ENCODE measurements at regions of chr17 and their contacts with region 1.

Region 1: GRCh38 chr17:75784473-75785015 is at the start of gene UNK:
- DNase-seq: peak; percentile 86 to 98 (median 96)
- ATAC-seq: peak; percentile 80
- H3K4me3 ChIP-seq: peak within 1 kb of the TSS; percentile 94
- H3K4me3 Mint-ChIP-seq: peak within 1 kb of the TSS; percentile 84 to 98 (median 92)
- H3K27ac ChIP-seq: peak within 1 kb of the TSS; percentile 99
- H3K27ac Mint-ChIP-seq: peak within 1 kb of the TSS; percentile 99 to 100 (median 100)
- H3K4me1 ChIP-seq: peaks cover 31 to 33% of the 10 kb centered on the region in 2 donors
- H3K4me1 Mint-ChIP-seq: peaks cover 23 to 60% (median 51%) of the 10 kb centered on the region in 7 donors
- H3K27me3 ChIP-seq: no peaks in the 10 kb centered on the region
- H3K27me3 Mint-ChIP-seq: peaks cover 0 to 2% (median 0%) of the 10 kb centered on the region in 5 donors
- total RNA-seq, gene UNK: 32.0 to 49.8 (median 41.0) TPM

Region 2: DNA sequence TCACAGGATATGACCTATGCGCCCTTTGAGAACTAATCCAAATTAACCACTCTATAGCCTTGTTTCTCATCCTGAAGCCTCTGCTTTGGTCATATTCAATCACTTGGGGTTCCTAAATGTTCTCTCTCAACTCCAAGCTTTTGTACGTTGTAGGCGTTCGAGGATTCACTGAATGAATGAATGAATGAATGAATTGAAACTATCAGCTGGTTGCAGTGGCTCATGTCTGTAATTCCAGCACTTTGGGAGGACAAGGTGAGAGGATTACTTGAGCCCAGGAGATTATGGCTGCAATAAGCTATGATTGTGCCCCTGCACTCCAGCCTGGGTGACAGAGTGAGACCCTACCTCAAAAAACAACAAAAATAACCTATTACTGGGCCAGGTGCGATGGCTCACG is 595.9 kb before region 1 on chr17:
- CTCF ChIA-PET with region 1: no interaction called
- POLR2A ChIA-PET with region 1: no interaction called
- intact Hi-C with region 1: no loop called
- DNase-seq: no peak
- ATAC-seq: no peak
- H3K4me3 ChIP-seq: no peak overlapping the region
- H3K4me3 Mint-ChIP-seq: no peak overlapping the region
- H3K27ac ChIP-seq: no peak overlapping the region
- H3K27ac Mint-ChIP-seq: peak overlapping the region in 1 of 9 donors; percentile 95
- H3K4me1 ChIP-seq: peaks cover 6 to 7% of the 10 kb centered on the region in 2 donors
- H3K4me1 Mint-ChIP-seq: peaks cover 8 to 23% (median 12%) of the 10 kb centered on the region in 7 donors
- H3K27me3 ChIP-seq: no peaks in the 10 kb centered on the region
- H3K27me3 Mint-ChIP-seq: no peaks in the 10 kb centered on the region

Region 3: GRCh38 chr17:75405365-75406221 is 379.0 kb before region 1 on chr17 and contains the start of gene GRB2:
- CTCF ChIA-PET with region 1: no interaction called
- POLR2A ChIA-PET with region 1: interaction called, 3 read pairs
- intact Hi-C with region 1: loop called in 1 of 2 experiments (anchors 1 kb)
- DNase-seq: peak; percentile 98 to 100 (median 100)
- ATAC-seq: peak; percentile 93
- H3K4me3 ChIP-seq: peak within 1 kb of the TSS; percentile 83
- H3K4me3 Mint-ChIP-seq: peak within 1 kb of the TSS; percentile 91 to 100 (median 96)
- H3K27ac ChIP-seq: peak within 1 kb of the TSS; percentile 91
- H3K27ac Mint-ChIP-seq: peak within 1 kb of the TSS; percentile 84 to 98 (median 95)
- H3K4me1 ChIP-seq: peaks cover 31 to 33% of the 10 kb centered on the region in 2 donors
- H3K4me1 Mint-ChIP-seq: peaks cover 26 to 51% (median 47%) of the 10 kb centered on the region in 7 donors
- H3K27me3 ChIP-seq: no peaks in the 10 kb centered on the region
- H3K27me3 Mint-ChIP-seq: no peaks in the 10 kb centered on the region
- total RNA-seq, gene GRB2: 112 to 167 (median 139) TPM

Region 4: GRCh38 chr17:75749545-75750389 is 34.8 kb before region 1 on chr17:
- CTCF ChIA-PET with region 1: interaction called, 15 read pairs
- POLR2A ChIA-PET with region 1: interaction called, 62 read pairs
- intact Hi-C with region 1: loop called in 1 of 2 experiments (anchors 2 kb)
- DNase-seq: peak; percentile 65 to 92 (median 82)
- ATAC-seq: peak; percentile 84
- H3K4me3 ChIP-seq: no peak overlapping the region
- H3K4me3 Mint-ChIP-seq: peak overlapping the region in 2 of 10 donors; percentile 25 to 44
- H3K27ac ChIP-seq: no peak overlapping the region
- H3K27ac Mint-ChIP-seq: peak overlapping the region in 2 of 9 donors; percentile 21 to 55
- H3K4me1 ChIP-seq: peaks cover 5 to 14% of the 10 kb centered on the region in 2 donors
- H3K4me1 Mint-ChIP-seq: peaks cover 9 to 21% (median 14%) of the 10 kb centered on the region in 7 donors
- H3K27me3 ChIP-seq: no peaks in the 10 kb centered on the region
- H3K27me3 Mint-ChIP-seq: peaks cover 0 to 5% (median 0%) of the 10 kb centered on the region in 5 donors

Region 5: DNA sequence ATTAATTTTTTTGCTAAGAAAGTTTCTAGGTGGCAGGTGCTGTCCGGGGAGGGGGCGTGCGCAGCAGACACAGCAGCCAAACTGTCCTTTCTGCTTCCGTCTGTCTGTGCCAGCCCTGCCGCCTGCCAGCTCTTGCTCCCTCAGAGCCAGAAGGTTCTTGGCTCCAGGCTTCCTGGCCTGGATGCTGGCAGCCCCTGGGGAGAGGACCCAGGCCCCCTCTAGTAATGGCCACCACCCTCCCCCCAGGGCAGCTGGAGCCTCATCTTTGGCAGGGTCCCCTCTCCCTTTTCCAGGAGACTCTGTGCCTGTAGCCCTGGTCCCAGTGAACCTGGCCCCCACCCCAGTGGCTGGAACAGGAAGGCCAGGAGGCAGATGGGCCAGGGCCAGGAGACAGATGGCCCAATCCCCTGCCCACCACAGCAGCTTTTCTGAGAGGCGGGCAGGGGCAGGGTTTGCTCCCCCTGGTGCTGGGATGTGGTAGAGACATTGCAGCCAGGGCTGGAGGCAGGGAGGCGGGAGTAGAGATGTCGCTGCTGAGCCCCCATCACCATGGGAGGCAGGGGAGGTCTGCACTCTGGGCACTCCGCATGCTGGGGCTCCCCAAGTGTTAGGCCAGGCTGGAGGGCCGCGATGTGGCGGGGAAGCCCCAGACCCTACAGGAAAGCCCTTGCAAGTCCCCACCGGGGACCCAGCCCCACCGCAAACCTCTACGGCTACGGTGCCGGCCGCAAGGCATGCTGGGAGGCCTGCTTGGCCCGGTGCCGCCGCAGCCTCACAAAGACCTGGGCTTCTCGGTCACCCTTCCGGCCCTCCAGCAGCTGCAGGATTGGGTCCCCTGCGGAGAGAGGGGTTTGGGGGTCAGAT is 42.9 kb after region 1 on chr17:
- CTCF ChIA-PET with region 1: interaction called, 30 read pairs
- POLR2A ChIA-PET with region 1: interaction called, 77 read pairs
- intact Hi-C with region 1: loop called (anchors 2 to 5 kb)
- DNase-seq: peak; percentile 41 to 66 (median 61)
- ATAC-seq: peak; percentile 76
- H3K4me3 ChIP-seq: peak overlapping the region; percentile 30
- H3K4me3 Mint-ChIP-seq: peak overlapping the region; percentile 37 to 74 (median 56)
- H3K27ac ChIP-seq: peak overlapping the region; percentile 67
- H3K27ac Mint-ChIP-seq: peak overlapping the region; percentile 6 to 91 (median 76)
- H3K4me1 ChIP-seq: peaks cover 8% of the 10 kb centered on the region in 2 donors
- H3K4me1 Mint-ChIP-seq: peaks cover 5 to 16% (median 11%) of the 10 kb centered on the region in 7 donors
- H3K27me3 ChIP-seq: no peaks in the 10 kb centered on the region
- H3K27me3 Mint-ChIP-seq: no peaks in the 10 kb centered on the region

Region 6: DNA sequence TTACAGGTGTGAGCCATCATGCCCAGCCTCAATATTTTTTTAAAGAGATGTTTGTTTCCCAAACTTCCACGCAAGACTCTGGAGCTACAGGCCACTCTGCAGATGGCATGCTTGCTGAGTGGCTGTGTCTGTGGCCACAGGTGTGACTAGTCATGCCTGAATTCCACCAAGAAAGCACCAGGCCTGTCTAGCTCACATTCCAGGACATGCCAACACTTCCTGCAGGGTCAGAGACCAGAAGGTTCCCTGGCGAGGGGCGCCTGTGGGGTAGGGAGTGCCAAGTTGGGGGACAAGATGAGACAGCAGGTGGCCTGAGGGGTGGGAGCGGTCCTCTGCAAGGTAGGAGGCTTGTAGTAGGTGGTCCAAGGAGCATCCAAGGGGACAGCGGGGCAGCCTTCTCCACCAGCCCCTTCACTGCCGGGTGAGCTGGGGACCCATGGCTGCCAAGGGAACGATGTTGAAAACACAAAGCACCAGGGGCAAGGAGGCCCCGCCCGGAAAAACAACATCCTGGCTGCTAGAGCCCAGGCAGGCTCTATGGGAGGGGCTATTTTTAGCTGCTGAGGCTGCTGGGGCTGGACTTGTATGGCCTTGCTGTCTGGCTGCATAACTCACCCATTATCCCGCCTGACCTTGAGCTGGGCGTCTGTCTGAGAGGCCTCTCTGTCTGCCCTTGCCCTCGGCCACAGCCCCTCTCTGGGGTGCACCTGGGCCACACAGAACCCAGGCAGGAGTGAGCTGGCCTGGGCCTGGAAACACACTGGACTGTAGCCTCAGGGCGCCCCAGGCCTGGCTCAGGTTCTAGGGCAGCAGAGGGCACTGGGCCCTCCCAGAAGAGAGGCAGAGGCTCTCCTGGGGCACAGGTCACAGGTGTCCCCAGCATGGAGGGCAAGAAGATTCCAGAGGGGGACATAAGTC is 88.1 kb after region 1 on chr17:
- CTCF ChIA-PET with region 1: interaction called, 3 read pairs
- POLR2A ChIA-PET with region 1: interaction called, 28 read pairs
- intact Hi-C with region 1: no loop called
- DNase-seq: peak in 8 of 9 donors; percentile 41 to 75 (median 59)
- ATAC-seq: peak; percentile 68
- H3K4me3 ChIP-seq: no peak overlapping the region
- H3K4me3 Mint-ChIP-seq: peak overlapping the region in 5 of 10 donors; percentile 30 to 69 (median 48)
- H3K27ac ChIP-seq: peak overlapping the region; percentile 57
- H3K27ac Mint-ChIP-seq: peak overlapping the region; percentile 68 to 98 (median 83)
- H3K4me1 ChIP-seq: peaks cover 30 to 36% of the 10 kb centered on the region in 2 donors
- H3K4me1 Mint-ChIP-seq: peaks cover 24 to 50% (median 39%) of the 10 kb centered on the region in 7 donors
- H3K27me3 ChIP-seq: no peaks in the 10 kb centered on the region
- H3K27me3 Mint-ChIP-seq: peaks cover 0 to 2% (median 0%) of the 10 kb centered on the region in 5 donors

Region 7: DNA sequence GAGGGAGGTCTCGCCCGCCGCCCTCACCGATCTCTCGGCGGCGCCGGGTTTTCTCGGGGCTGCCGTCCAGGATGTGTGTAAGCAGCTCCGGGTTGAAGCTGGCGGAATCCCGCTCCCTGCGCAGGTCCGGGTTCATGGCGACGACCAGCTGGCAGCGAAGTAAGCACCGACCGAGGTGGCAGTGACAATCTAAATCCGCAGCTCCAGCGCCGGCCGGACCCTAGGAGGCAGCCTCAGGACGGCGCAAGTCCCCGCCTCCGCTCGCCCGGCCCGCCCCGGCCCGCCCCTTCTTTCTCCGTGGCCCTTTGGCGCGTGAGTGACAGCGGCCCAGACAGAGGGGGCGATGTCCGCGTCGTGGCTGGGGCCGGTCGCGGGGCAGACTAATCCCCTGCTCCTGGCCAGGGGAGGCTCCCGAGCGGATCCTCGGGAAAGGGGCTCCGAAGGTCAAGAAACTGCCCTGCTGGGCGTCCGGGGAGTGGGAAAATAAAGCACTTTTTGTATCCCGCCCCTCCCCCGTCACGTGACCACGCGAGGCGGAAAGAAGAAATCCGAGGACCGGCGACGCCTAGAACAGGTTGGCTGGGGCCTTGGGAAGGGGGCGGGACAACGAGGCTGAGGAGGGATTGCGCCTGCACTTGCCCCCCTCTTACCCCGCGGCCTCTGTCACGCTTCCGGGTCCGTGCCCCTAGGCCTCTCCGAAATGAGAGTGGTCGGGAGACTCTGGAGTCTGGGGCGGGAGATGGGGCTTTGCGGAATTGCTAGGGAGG is 194.6 kb after region 1 on chr17 and contains the starts of genes ACOX1 and TEN1:
- CTCF ChIA-PET with region 1: no interaction called
- POLR2A ChIA-PET with region 1: interaction called, 3 read pairs
- intact Hi-C with region 1: loop called (anchors 1 kb)
- DNase-seq: peak; percentile 84 to 96 (median 93)
- ATAC-seq: peak; percentile 95
- H3K4me3 ChIP-seq: peak within 1 kb of the TSS; percentile 89
- H3K4me3 Mint-ChIP-seq: peak within 1 kb of the TSS; percentile 91 to 99 (median 98)
- H3K27ac ChIP-seq: peak within 1 kb of the TSS; percentile 100
- H3K27ac Mint-ChIP-seq: peak within 1 kb of the TSS; percentile 98 to 100 (median 100)
- H3K4me1 ChIP-seq: peaks cover 5 to 6% of the 10 kb centered on the region in 2 donors
- H3K4me1 Mint-ChIP-seq: peaks cover 26 to 53% (median 47%) of the 10 kb centered on the region in 7 donors
- H3K27me3 ChIP-seq: no peaks in the 10 kb centered on the region
- H3K27me3 Mint-ChIP-seq: no peaks in the 10 kb centered on the region
- total RNA-seq, gene ACOX1: 22.8 to 35.0 (median 33.5) TPM
- total RNA-seq, gene TEN1: 13.1 to 20.1 (median 13.8) TPM

Region 8: GRCh38 chr17:76737082-76737675 is 952.6 kb after region 1 on chr17 and contains the start of gene SRSF2:
- CTCF ChIA-PET with region 1: no interaction called
- POLR2A ChIA-PET with region 1: interaction called, 3 read pairs
- intact Hi-C with region 1: loop called in 1 of 2 experiments (anchors 10 kb)
- DNase-seq: peak; percentile 98 to 100 (median 99)
- ATAC-seq: peak; percentile 86
- H3K4me3 ChIP-seq: peak within 1 kb of the TSS; percentile 97
- H3K4me3 Mint-ChIP-seq: peak within 1 kb of the TSS; percentile 90 to 99 (median 97)
- H3K27ac ChIP-seq: peak within 1 kb of the TSS; percentile 96
- H3K27ac Mint-ChIP-seq: peak within 1 kb of the TSS; percentile 95 to 100 (median 99)
- H3K4me1 ChIP-seq: peaks cover 45 to 49% of the 10 kb centered on the region in 2 donors
- H3K4me1 Mint-ChIP-seq: peaks cover 26 to 66% (median 58%) of the 10 kb centered on the region in 7 donors
- H3K27me3 ChIP-seq: no peaks in the 10 kb centered on the region
- H3K27me3 Mint-ChIP-seq: no peaks in the 10 kb centered on the region
- total RNA-seq, gene SRSF2: 327 to 363 (median 351) TPM

Measured in naive thymus-derived CD4-positive, alpha-beta T cell (primary cell).